Activated CD4-positive, alpha-beta memory T cell treated with anti-CD3 and anti-CD28 coated beads, Interleukin-2, amount 10 ng/mL, durations not matched to agents 7 days and 5 days (primary cell): ENCODE measurements at regions of chr16 and their contacts with region 1.

Region 1: DNA sequence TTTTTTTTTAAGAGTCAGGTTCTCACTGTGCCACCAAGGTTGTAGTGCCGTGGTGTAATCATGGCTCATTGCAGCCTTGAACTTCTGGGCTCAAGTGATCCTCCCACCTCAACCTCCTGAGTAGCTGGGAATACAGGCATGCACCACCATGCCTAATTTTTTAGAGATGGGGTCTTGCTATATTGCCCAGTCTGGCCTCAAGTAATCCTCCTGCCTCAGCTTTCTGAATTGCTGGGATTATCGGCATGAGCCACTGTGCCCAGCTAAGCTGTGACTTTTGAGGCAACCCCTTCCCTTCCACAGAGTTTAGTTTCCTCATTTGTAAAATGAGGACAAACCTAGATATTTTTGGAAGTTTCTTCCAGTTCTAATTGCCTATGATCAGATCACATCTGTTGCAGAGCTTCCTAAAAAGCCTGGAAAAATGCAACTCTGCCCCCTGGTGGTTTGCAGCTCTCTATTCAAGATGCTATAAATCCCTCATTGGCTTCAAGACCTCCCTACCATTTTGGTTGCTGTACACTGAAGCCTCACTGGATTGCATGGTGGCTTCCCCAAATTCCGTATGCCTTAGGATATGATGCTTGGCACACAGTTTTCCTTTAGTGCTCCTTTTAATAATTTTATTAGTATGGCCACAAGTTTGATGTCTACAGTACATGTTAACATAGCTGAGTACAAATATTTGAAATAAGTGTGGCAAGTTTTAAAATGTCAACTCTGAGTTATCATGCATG is 19.3 kb downstream of the GDE1 start:
- DNase-seq: peak; percentile 75
- H3K4me3 Mint-ChIP-seq: no peak overlapping the region
- H3K27ac Mint-ChIP-seq: no peak overlapping the region
- H3K4me1 Mint-ChIP-seq: peaks cover 22% of the 10 kb centered on the region
- H3K27me3 Mint-ChIP-seq: no peaks in the 10 kb centered on the region

Region 2: DNA sequence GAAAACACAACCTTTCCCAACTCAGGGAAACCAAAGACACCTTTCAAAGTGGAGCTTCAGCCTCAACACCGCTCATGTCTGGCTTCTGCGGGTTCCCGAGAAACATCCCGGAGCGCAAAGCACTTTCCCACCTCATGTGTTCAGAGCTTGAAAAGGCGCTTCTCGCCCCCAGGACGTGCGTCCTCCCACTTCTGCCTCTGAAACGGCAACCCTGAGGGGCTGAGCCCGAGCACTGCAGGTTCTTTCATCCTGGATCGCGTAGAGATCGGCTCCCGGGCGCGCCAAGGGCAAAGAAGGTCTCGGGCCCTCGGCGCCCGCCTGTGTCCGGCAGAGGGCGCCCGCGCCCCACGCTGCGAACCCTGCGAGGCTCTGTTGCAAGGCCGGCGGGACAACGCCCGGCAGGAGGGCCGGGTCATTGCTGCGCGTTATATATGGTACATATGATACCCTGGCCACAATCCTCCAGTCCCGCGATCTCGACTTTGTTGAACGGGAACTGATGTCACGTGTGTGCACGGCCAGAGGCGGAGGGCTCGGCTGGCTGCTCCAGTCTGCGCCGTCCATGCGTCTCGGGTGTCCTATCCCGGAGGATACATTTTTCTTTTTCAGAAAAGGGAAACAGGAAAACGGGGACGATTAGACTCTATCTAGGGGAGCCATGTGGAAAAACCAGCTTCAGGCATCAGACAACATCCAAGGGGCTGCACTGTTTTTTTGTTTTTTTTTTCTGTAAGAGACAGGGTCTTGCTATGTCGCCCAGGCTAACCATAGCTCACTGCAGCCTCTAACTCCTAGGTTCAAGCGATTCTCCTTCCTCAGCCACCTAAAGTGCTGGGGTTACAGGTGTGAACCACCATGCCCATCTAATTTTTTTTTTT is 416.0 kb before region 1 on chr16:
- CTCF ChIA-PET with region 1: interaction called, 23 read pairs
- POLR2A ChIA-PET with region 1: no interaction called
- DNase-seq: peak; percentile 81
- H3K4me3 Mint-ChIP-seq: peak overlapping the region; percentile 27
- H3K27ac Mint-ChIP-seq: no peak overlapping the region
- H3K4me1 Mint-ChIP-seq: peaks cover 7% of the 10 kb centered on the region
- H3K27me3 Mint-ChIP-seq: peaks cover 9% of the 10 kb centered on the region

Region 3: GRCh38 chr16:19375561-19376158 is 126.9 kb before region 1 on chr16:
- CTCF ChIA-PET with region 1: interaction called, 11 read pairs
- POLR2A ChIA-PET with region 1: no interaction called
- DNase-seq: peak; percentile 46
- H3K4me3 Mint-ChIP-seq: no peak overlapping the region
- H3K27ac Mint-ChIP-seq: no peak overlapping the region
- H3K4me1 Mint-ChIP-seq: peaks cover 12% of the 10 kb centered on the region
- H3K27me3 Mint-ChIP-seq: no peaks in the 10 kb centered on the region

Region 4: DNA sequence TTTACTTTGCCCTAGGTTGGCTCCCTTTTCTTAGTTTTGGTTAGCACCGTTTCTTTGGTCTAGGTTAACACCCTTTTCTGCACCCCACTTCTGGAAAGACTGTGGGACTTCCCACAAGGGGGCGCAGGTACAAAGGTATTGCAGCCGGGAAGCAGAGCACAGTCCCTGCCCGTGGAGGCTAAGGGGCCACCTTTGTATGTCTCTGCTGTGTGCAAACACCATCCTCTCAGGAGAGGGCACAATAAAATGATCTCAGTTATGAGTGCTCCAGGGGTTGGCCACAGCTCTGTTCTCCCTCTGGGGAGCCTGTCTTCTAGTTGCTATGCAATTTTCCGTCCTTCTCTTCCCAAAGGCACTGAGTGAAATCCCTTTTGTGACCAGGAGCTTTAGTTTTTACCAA is 113.3 kb before region 1 on chr16:
- CTCF ChIA-PET with region 1: interaction called, 43 read pairs
- POLR2A ChIA-PET with region 1: no interaction called
- DNase-seq: peak; percentile 67
- H3K4me3 Mint-ChIP-seq: no peak overlapping the region
- H3K27ac Mint-ChIP-seq: no peak overlapping the region
- H3K4me1 Mint-ChIP-seq: peaks cover 15% of the 10 kb centered on the region
- H3K27me3 Mint-ChIP-seq: peaks cover 43% of the 10 kb centered on the region

Region 5: DNA sequence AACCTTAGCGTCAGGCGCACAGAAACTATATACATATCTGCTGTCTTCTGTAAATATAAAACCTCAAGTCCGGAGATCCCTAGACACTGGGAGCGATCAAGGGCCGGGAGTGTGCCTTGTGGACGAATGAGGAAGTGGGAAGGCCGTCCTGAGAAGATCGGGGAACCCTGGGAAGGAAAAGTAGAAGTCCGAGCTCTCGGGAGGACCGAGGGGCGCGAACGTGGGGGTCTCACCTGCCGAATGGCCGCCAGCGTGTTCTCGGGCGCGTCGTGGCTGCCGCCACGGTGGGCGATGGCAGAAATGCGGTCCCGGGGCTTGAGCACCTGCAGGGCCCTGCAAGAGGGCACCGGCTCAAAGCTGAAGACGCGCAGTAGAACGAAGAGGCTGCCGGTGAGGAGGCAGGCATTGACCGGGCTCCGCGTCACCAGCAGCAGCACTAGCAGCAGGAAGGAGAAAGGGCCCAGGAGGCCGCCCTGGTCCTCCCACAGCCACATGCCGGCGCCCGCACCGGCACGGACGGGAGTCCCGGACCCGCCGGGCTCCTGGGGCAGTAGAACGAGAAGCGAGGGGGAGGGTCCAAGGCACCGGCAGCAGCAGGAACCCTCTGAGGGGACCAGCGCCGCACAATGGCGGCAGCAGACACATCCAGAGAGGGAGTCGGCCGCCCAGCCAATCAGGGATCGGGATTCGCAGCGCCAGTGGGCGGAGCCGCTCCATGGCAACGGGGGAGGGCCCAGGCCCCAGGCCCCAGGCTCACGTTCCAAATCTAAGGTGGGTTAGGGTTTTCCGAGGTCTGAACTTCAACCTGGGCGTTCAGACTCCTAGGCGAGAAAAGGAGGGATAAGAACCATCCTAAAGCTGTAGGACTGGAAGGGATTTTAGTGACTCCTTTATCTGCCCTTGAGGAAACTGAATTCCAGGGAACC is 19.2 kb after region 1 on chr16 and contains the start of gene GDE1:
- CTCF ChIA-PET with region 1: interaction called, 27 read pairs
- POLR2A ChIA-PET with region 1: interaction called, 8 read pairs
- DNase-seq: peak; percentile 94
- H3K4me3 Mint-ChIP-seq: peak within 1 kb of the TSS; percentile 93
- H3K27ac Mint-ChIP-seq: peak within 1 kb of the TSS; percentile 89
- H3K4me1 Mint-ChIP-seq: peaks cover 67% of the 10 kb centered on the region
- H3K27me3 Mint-ChIP-seq: no peaks in the 10 kb centered on the region
- total RNA-seq, gene GDE1: 54.6 to 55.4 TPM